Activated T-helper 2 cell treated with anti-CD3 and anti-CD28 coated beads, Interferon-gamma antibody, Interleukin-2, Interleukin-4, amounts not matched to agents 10 μg/mL and 5 μg/mL and 100 μg/mL, durations not matched to agents 14 hours and 24 hours and 36 hours (primary cell): ENCODE measurements at regions of chr11 and their contacts with region 1.

Region 1: GRCh38 chr11:35040221-35040942 is 98.6 kb upstream of the CD44 start:
- DNase-seq: peak; percentile 69
- H3K4me3 Mint-ChIP-seq: peak overlapping the region; percentile 73
- H3K27ac Mint-ChIP-seq: peak overlapping the region; percentile 91
- H3K4me1 Mint-ChIP-seq: peaks cover 58% of the 10 kb centered on the region
- H3K27me3 Mint-ChIP-seq: peaks cover 20% of the 10 kb centered on the region

Region 2: DNA sequence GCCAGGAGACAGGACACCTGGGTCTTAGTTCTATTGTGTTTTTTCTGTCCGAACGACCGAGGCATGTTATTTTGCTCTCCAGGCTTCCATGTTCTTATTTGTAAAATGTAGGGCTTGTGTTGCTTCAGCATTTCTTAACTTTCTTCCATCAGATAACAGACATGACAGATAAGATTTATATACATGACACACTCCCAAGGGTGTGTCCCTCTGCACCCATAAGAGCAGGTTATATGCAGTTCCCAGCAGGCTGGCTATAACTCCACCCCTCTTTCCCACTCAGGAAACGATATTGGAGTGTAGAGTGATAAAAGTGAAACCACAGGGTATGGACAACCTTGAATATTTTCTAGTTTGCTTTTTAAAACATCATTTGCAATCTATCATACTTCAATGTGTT is 190.0 kb before region 1 on chr11:
- intact Hi-C with region 1: no loop called
- DNase-seq: no peak
- H3K4me3 Mint-ChIP-seq: no peak overlapping the region
- H3K27ac Mint-ChIP-seq: no peak overlapping the region
- H3K4me1 Mint-ChIP-seq: no peaks in the 10 kb centered on the region
- H3K27me3 Mint-ChIP-seq: peaks cover 15% of the 10 kb centered on the region

Region 3: GRCh38 chr11:34916015-34916842 is 124.2 kb before region 1 on chr11 and contains the starts of genes APIP and PDHX:
- intact Hi-C with region 1: loop called (anchors 1 kb)
- DNase-seq: peak; percentile 90
- H3K4me3 Mint-ChIP-seq: peak within 1 kb of the TSS; percentile 90
- H3K27ac Mint-ChIP-seq: peak within 1 kb of the TSS; percentile 91
- H3K4me1 Mint-ChIP-seq: peaks cover 29% of the 10 kb centered on the region
- H3K27me3 Mint-ChIP-seq: no peaks in the 10 kb centered on the region
- total RNA-seq, gene APIP: 28.1 and 30.7 TPM in 2 replicates
- total RNA-seq, gene PDHX: 29.7 and 30.6 TPM in 2 replicates

Region 4: DNA sequence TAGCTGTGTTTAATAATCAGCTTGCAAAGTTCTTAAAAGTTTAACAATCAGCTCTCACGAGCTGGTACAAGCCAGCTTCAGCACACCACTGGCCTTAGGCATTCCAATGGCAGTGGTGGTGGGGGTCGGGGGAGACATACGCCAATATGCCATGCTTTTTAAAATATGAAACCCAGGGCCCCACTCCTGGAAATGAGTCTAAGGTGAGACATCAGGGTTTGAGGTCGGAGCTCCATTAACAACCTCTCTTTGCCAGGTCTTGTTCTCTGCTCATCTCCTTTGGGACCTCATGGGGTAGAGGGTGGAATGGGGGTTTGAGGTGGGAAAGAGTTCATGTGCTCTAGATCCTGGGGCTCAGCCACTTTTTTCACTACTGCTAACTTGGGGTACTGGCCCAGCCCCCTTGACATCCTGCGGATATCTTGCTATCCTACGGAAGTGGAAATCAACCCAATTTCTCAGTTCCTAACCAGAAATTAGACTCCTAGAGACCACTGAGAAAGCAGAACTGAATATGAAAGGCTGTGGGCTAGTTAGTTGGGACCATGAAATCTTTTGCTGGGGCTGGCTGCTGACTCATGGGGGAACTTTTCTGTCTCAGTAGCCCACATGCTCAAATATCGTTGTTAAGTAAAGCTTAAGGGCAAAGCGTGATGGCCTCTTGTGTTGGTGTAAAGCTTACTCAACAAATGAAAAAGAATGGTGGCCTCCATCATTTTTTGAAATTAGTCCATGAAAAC is 33.8 kb before region 1 on chr11:
- intact Hi-C with region 1: loop called (anchors 1 kb)
- DNase-seq: no peak
- H3K4me3 Mint-ChIP-seq: no peak overlapping the region
- H3K27ac Mint-ChIP-seq: peak overlapping the region; percentile 5
- H3K4me1 Mint-ChIP-seq: peaks cover 57% of the 10 kb centered on the region
- H3K27me3 Mint-ChIP-seq: peaks cover 28% of the 10 kb centered on the region

Region 5: DNA sequence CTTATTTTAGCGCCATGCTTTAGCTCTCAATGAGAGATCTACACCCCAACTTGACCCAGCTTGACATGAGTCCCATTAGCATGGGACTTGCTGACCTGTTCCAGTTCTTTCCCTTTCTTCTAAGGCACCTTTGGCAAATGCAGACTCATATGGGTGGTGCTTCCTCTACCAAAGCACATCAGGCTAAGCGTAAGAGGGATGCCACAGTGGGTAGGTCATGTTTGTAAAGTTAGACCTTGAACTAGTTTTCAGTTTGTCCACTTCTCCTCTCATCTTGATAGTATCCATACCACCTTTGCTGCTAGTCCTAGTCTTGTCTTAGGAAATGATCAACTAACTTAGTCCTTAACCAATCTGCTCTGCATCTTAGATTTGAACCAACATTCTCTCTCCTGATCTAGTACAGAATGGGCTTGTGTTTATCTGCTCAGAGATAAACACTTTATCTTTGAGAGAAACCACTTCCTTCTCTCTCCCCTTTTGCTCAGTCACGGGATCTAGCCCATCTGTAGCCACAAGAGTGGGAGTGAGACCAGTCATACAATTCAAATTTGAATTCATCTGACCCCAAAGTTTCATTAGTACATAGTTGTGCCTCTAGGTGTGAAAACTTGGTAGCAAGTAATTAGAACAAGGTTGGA is 26.5 kb after region 1 on chr11:
- intact Hi-C with region 1: loop called (anchors 1 kb)
- DNase-seq: no peak
- H3K4me3 Mint-ChIP-seq: no peak overlapping the region
- H3K27ac Mint-ChIP-seq: peak overlapping the region; percentile 24
- H3K4me1 Mint-ChIP-seq: peaks cover 22% of the 10 kb centered on the region
- H3K27me3 Mint-ChIP-seq: peaks cover 10% of the 10 kb centered on the region

Region 6: DNA sequence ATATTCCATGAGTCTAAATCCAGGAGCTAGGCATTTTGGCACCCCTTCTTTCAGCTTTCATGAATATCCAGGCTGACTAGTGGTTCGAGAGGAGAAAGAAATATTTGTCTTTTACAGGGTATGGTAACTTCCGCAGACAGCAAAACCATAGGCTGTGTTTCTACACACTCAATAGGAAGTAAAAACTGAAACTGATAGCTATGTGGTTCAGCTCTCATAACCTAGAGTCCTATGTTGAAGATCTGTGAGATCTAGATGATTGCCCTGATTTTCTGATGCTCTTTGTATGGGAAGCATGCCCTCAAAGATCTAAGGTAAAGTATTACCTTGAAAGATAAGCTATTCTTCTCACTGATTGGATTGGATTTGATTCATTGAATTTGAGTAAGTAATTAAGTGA is 216.9 kb after region 1 on chr11:
- intact Hi-C with region 1: no loop called
- DNase-seq: no peak
- H3K4me3 Mint-ChIP-seq: no peak overlapping the region
- H3K27ac Mint-ChIP-seq: no peak overlapping the region
- H3K4me1 Mint-ChIP-seq: peaks cover 20% of the 10 kb centered on the region
- H3K27me3 Mint-ChIP-seq: peaks cover 68% of the 10 kb centered on the region

Region 7: GRCh38 chr11:35343033-35343598 is 302.7 kb after region 1 on chr11:
- intact Hi-C with region 1: loop called (anchors 2 kb)
- DNase-seq: peak; percentile 74
- H3K4me3 Mint-ChIP-seq: peak overlapping the region; percentile 20
- H3K27ac Mint-ChIP-seq: peak overlapping the region; percentile 81
- H3K4me1 Mint-ChIP-seq: peaks cover 46% of the 10 kb centered on the region
- H3K27me3 Mint-ChIP-seq: no peaks in the 10 kb centered on the region

Region 8: GRCh38 chr11:35458846-35459245 is 418.5 kb after region 1 on chr11:
- intact Hi-C with region 1: no loop called
- DNase-seq: no peak
- H3K4me3 Mint-ChIP-seq: no peak overlapping the region
- H3K27ac Mint-ChIP-seq: no peak overlapping the region
- H3K4me1 Mint-ChIP-seq: no peaks in the 10 kb centered on the region
- H3K27me3 Mint-ChIP-seq: peaks cover 10% of the 10 kb centered on the region